Activated naive CD4-positive, alpha-beta T cell treated with anti-CD3 and anti-CD28 coated beads for 36 hours (primary cell): ENCODE measurements at regions of chr5 and their contacts with region 1.

Region 1: DNA sequence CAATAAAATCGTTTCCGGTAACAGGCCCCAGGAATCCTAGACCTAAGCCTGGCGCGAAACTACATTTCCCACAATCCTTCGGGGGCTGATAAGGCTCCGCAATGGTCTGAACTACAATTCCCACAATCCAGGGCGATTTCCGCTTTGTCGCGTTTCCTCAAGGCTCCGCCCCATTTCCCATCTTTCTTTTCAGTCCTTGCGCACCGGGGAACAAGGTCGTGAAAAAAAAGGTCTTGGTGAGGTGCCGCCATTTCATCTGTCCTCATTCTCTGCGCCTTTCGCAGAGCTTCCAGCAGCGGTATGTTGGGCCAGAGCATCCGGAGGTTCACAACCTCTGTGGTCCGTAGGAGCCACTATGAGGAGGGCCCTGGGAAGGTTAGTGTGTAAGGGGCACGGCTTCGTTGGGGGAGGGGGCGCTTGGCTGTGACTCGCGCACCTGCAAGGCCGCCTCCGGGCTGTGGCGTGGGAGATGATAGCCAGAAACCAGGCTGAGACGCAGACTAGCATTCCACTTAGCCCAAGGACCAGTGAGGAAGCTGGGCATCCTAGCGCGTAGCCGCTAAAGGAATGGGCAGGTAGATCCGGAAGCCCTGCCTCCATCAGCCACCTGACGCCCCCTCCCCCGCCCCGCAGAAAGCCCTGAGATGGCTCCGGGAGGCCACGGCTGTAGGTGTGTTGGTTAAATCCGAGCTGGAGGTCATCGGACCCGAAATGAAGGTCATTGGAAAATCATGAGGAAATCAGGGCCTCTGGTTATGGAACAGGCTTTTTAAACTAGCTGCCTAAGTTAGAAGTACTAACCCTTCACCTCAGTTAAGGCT is at the start of gene COX7C:
- DNase-seq: peak; percentile 96
- H3K4me3 Mint-ChIP-seq: peak within 1 kb of the TSS; percentile 100
- H3K27ac Mint-ChIP-seq: peak within 1 kb of the TSS; percentile 99
- H3K4me1 Mint-ChIP-seq: peaks cover 21% of the 10 kb centered on the region
- H3K27me3 Mint-ChIP-seq: peaks cover 2% of the 10 kb centered on the region
- total RNA-seq, gene COX7C: 925 to 952 TPM

Region 2: DNA sequence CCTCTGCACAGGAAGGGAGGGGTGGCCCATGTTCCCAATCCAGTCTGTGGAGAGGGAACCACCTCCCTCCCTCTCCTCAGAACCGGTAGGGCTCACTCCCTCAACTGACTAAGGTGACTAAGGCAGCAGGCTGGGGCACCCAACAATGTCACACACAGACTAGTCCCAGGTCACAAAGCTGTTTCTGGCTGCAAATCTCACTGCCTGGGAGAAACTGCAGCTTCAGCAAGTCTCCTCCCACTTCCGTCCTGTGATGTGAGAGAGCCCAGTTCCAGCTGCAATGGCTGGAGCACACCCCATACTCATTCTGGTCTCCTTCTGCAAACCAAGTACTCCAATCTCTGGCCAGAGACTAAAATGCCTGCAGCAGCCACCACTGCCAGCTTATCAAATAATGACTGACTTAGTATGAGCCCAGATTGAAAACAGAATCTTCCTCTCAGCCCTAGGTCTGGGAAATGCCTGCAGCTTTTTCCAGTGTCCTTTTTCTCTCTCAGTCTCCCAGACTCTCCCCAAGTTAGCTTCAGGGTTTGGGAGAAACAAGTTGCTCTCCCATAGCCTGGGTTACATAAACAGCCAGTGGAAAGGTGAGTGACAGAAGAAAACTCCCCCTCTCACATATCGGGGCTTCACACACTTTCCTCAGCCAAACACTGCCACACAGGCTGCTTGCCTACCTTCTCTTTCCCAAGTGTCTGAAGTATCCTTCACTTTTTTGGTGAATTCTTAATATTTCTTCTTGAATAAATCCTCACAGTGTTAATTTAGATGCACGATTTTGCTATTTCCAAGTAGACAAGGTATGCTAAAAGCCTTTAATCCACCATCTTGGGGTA is 402.4 kb after region 1 on chr5:
- CTCF ChIA-PET with region 1: no interaction called
- intact Hi-C with region 1: loop called (anchors 1 kb)
- DNase-seq: peak; percentile 40
- H3K4me3 Mint-ChIP-seq: no peak overlapping the region
- H3K27ac Mint-ChIP-seq: no peak overlapping the region
- H3K4me1 Mint-ChIP-seq: peaks cover 16% of the 10 kb centered on the region
- H3K27me3 Mint-ChIP-seq: no peaks in the 10 kb centered on the region

Region 3: GRCh38 chr5:88268385-88269184 is 1650.6 kb after region 1 on chr5 and contains the start of gene TMEM161B:
- CTCF ChIA-PET with region 1: no interaction called
- intact Hi-C with region 1: loop called (anchors 5 kb)
- DNase-seq: peak; percentile 94
- H3K4me3 Mint-ChIP-seq: peak within 1 kb of the TSS; percentile 93
- H3K27ac Mint-ChIP-seq: peak within 1 kb of the TSS; percentile 96
- H3K4me1 Mint-ChIP-seq: peaks cover 42% of the 10 kb centered on the region
- H3K27me3 Mint-ChIP-seq: no peaks in the 10 kb centered on the region
- total RNA-seq, gene TMEM161B: 18.0 to 18.1 TPM

Region 4: DNA sequence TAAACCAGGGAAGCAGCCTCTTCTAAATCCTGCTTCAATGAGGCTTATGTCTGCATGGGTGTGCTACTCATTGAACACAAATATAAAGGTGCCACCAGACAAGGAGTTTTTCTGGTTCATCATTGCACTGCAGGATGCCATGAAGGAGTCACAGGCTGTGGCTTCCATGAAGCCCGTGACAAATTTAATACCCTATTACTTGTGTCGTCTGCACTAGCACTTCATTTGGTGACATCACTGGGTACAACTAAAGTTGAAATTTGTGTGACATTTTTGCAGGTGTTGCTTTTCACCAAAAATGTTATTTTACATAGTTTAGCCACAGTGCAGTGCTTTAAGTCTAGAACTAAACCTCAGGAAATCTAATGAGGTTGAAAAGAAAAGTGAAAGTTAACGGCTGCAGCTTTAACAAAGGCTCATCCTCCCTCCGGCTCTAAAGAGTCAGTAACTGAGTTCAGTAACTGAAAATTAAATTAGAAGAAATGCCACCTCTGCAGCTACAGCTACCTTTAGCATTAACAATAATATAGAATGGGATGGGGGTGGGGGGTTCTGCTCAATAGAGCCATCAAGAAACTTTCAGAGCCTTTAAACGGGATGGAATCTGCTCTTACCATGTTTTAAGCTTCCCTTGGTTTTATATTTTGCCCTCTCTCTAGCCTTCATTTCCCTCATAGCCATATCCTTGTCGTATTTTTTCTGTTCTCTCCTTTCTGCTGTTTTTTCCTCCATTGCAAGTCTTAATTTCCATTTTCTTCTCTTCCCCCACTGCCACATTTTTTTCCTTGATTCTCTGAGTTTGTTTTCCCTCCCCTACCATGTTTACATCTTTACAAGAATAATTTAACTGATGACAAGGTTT is 1884.4 kb after region 1 on chr5:
- CTCF ChIA-PET with region 1: no interaction called
- intact Hi-C with region 1: loop called (anchors 5 kb)
- DNase-seq: peak; percentile 20
- H3K4me3 Mint-ChIP-seq: peak overlapping the region; percentile 78
- H3K27ac Mint-ChIP-seq: peak overlapping the region; percentile 77
- H3K4me1 Mint-ChIP-seq: peaks cover 3% of the 10 kb centered on the region
- H3K27me3 Mint-ChIP-seq: no peaks in the 10 kb centered on the region